Endothelial cell of umbilical vein (primary cell): ENCODE measurements at regions of chr9 and their contacts with region 1.

Region 1: GRCh38 chr9:34403554-34404380 is 27.1 kb upstream of the MYORG start:
- DNase-seq: peak; percentile 66
- H3K4me3 ChIP-seq: no peak overlapping the region
- H3K27ac ChIP-seq: no peak overlapping the region
- H3K4me1 ChIP-seq: no peaks in the 10 kb centered on the region
- H3K27me3 ChIP-seq: no peaks in the 10 kb centered on the region
- CTCF ChIP-seq: peak; percentile 87 to 98
- POLR2A ChIP-seq: no peak

Region 2: GRCh38 chr9:34328987-34329832 is 74.6 kb before region 1 on chr9 and contains the starts of genes KIF24 and NUDT2:
- CTCF ChIA-PET with region 1: interaction called, 12 read pairs
- POLR2A ChIA-PET with region 1: no interaction called
- dilution Hi-C with region 1: no loop called
- intact Hi-C with region 1: no loop called
- DNase-seq: peak; percentile 100
- H3K4me3 ChIP-seq: peak within 1 kb of the TSS; percentile 75 to 89 (median 87)
- H3K27ac ChIP-seq: peak within 1 kb of the TSS; percentile 89
- H3K4me1 ChIP-seq: peaks cover 8% of the 10 kb centered on the region
- H3K27me3 ChIP-seq: no peaks in the 10 kb centered on the region
- CTCF ChIP-seq: no peak
- POLR2A ChIP-seq: peak; percentile 91
- total RNA-seq, gene KIF24: 4.5 and 4.8 TPM in 2 replicates
- total RNA-seq, gene NUDT2: 25.1 and 25.2 TPM in 2 replicates

Region 3: DNA sequence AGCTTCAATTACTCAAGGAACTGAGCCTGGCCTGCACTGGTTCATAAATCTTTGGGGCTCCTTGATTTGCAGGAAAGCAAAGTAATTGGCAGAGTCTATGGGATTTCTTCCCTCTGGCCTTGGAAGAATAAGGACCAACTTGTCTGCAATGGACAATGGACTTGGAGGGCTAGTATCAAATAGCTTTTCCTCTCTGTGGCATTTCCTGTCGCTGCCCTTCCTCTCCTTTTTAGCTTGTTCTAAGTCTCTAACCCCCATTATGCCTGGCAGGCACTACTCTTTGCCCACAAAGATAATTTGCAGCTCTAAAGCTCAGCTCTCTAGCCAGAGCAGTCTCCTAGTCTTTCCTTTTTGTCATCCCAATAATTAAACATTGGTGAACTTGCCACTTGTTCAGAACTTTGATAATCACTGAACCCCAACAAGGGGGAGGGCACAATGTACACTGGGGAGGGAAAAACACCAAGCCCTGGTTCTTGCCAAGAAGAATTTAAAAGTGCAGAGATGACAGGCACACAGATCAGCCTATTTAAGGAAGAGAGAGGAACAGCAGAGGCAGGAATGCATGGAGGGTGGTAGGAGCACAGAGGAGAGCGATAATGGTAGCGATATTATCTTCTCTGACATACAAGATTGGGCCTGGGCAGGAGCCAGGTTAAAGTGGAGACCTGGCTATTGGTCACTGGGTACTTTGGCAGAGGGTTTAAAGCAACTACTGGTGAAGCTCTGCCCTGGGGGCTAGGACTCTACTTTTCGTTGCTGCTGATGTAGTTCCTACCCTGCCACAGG is 16.1 kb after region 1 on chr9:
- CTCF ChIA-PET with region 1: interaction called, 33 read pairs
- POLR2A ChIA-PET with region 1: no interaction called
- dilution Hi-C with region 1: no loop called
- intact Hi-C with region 1: no loop called
- DNase-seq: peak; percentile 22
- H3K4me3 ChIP-seq: no peak overlapping the region
- H3K27ac ChIP-seq: no peak overlapping the region
- H3K4me1 ChIP-seq: peaks cover 11% of the 10 kb centered on the region
- H3K27me3 ChIP-seq: no peaks in the 10 kb centered on the region
- CTCF ChIP-seq: no peak
- POLR2A ChIP-seq: no peak

Region 4: DNA sequence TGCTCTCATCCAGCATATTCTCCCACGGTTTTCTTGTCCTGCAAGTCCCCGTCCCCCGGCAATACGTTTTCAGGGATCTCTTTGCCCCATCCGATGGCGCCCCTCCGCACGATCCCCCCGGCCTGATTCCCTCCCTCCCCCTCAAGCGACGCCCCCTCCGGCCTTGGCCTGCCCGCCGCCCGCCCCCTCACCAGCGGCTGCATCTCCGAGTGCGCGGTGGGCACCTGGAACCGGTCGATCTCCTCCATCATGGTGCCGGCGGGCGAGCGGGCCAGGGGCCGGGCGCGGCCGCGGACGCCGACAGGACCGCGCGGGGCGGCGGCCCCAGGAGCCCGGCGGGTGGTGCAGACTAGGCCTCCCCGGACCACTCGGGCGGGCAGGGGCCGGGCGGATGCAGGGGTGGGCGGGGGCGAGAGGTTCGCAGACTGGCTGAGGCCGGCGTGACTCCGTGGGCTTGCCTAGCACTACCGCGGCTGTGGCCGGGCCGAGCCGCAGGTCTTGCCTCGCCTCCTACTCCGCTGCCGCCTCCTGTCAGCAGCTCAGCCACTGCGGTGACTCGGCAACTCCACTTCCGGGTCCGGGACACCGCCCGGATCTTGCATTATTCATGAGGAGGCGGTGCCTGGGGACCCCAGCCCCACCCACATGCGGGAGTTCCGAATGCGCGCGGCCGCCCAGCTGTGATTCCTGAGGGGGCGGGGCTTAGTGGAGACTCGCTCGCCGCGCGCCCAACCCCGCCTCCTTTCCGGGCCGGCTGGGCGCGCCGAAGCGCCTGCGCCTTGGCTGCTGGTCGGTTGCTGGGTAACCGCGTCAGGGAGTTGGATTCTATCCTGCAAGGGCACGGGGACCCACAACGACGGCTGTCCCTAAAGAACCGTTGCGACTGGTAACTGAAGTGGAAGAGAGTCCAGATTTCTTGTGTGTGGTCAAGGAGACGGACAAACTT is 54.5 kb after region 1 on chr9 and contains the starts of genes DNAI1 and FAM219A:
- CTCF ChIA-PET with region 1: interaction called, 19 read pairs
- POLR2A ChIA-PET with region 1: no interaction called
- dilution Hi-C with region 1: no loop called
- intact Hi-C with region 1: no loop called
- DNase-seq: peak; percentile 99
- H3K4me3 ChIP-seq: peak within 1 kb of the TSS; percentile 47 to 70 (median 67)
- H3K27ac ChIP-seq: peak within 1 kb of the TSS; percentile 74
- H3K4me1 ChIP-seq: peaks cover 16% of the 10 kb centered on the region
- H3K27me3 ChIP-seq: peaks cover 5 to 18% of the 10 kb centered on the region in 2 experiments
- CTCF ChIP-seq: no peak
- POLR2A ChIP-seq: peak; percentile 83
- total RNA-seq, gene DNAI1: not detected in 2 replicates
- total RNA-seq, gene FAM219A: 35.7 and 39.5 TPM in 2 replicates

Region 5: GRCh38 chr9:34522971-34523797 is 119.4 kb after region 1 on chr9 and contains the start of gene ENHO:
- CTCF ChIA-PET with region 1: interaction called, 10 read pairs
- POLR2A ChIA-PET with region 1: no interaction called
- dilution Hi-C with region 1: loop called (anchors 25 kb)
- intact Hi-C with region 1: no loop called
- DNase-seq: peak; percentile 94
- H3K4me3 ChIP-seq: peak within 1 kb of the TSS in 2 of 3 experiments; percentile 14 to 32
- H3K27ac ChIP-seq: no peak within 1 kb of the TSS
- H3K4me1 ChIP-seq: peaks cover 3% of the 10 kb centered on the region
- H3K27me3 ChIP-seq: peaks cover 8 to 25% of the 10 kb centered on the region in 2 experiments
- CTCF ChIP-seq: no peak
- POLR2A ChIP-seq: no peak
- total RNA-seq, gene ENHO: not detected in 2 replicates

Region 6: GRCh38 chr9:34591248-34591916 is 187.6 kb after region 1 on chr9:
- CTCF ChIA-PET with region 1: interaction called, 113 read pairs
- POLR2A ChIA-PET with region 1: no interaction called
- dilution Hi-C with region 1: no loop called
- intact Hi-C with region 1: loop called (anchors 2 kb)
- DNase-seq: peak; percentile 70
- H3K4me3 ChIP-seq: no peak overlapping the region
- H3K27ac ChIP-seq: no peak overlapping the region
- H3K4me1 ChIP-seq: no peaks in the 10 kb centered on the region
- H3K27me3 ChIP-seq: peaks cover 66 to 75% of the 10 kb centered on the region in 2 experiments
- CTCF ChIP-seq: peak; percentile 88 to 99
- POLR2A ChIP-seq: no peak